CD4-positive, alpha-beta memory T cell (primary cell): ENCODE measurements at regions of chr7 and their contacts with region 1.

Region 1: GRCh38 chr7:150685219-150686029 is at the start of gene GIMAP2:
- DNase-seq: peak; percentile 64 to 69 (median 65)
- H3K4me3 ChIP-seq: peak within 1 kb of the TSS; percentile 80 to 97
- H3K4me3 Mint-ChIP-seq: peak within 1 kb of the TSS; percentile 94 to 99 (median 98)
- H3K27ac ChIP-seq: peak within 1 kb of the TSS; percentile 90
- H3K27ac Mint-ChIP-seq: peak within 1 kb of the TSS; percentile 90 to 99 (median 97)
- H3K4me1 ChIP-seq: peaks cover 60% of the 10 kb centered on the region
- H3K4me1 Mint-ChIP-seq: peaks cover 55 to 97% (median 74%) of the 10 kb centered on the region in 4 donors
- H3K27me3 ChIP-seq: no peaks in the 10 kb centered on the region
- H3K27me3 Mint-ChIP-seq: no peaks in the 10 kb centered on the region
- total RNA-seq, gene GIMAP2: 238 to 244 TPM

Region 2: DNA sequence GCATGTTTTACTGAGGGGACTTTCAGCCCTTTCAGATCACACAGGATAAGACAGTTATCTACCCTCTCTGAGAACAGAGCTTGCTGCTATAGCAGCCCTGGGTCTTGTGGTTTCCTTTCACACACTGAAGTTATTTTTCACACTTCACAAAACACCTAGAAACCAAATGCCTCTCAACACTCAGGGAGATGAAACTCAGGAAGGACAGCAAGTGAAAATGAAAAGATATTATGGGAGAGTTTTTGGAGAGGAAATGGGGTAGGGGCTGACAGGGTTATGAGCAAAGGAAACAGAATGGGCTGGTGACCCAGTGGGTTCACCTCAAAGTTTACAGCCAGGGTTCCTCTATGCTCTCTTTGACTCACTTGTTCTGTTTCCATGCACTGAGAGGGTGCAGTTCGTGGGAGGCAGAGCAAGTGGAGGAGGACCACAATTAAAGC is 16.9 kb before region 1 on chr7:
- CTCF ChIA-PET with region 1: interaction called, 5 read pairs
- POLR2A ChIA-PET with region 1: interaction called, 79 read pairs
- intact Hi-C with region 1: loop called (anchors 1 kb)
- DNase-seq: peak; percentile 80 to 88 (median 85)
- H3K4me3 ChIP-seq: peak overlapping the region; percentile 2 to 26
- H3K4me3 Mint-ChIP-seq: peak overlapping the region; percentile 55 to 84 (median 72)
- H3K27ac ChIP-seq: peak overlapping the region; percentile 68
- H3K27ac Mint-ChIP-seq: peak overlapping the region; percentile 82 to 99 (median 98)
- H3K4me1 ChIP-seq: peaks cover 92% of the 10 kb centered on the region
- H3K4me1 Mint-ChIP-seq: peaks cover 63 to 95% (median 79%) of the 10 kb centered on the region in 4 donors
- H3K27me3 ChIP-seq: no peaks in the 10 kb centered on the region
- H3K27me3 Mint-ChIP-seq: no peaks in the 10 kb centered on the region

Region 3: GRCh38 chr7:150703209-150703608 is 17.8 kb after region 1 on chr7:
- CTCF ChIA-PET with region 1: no interaction called
- POLR2A ChIA-PET with region 1: interaction called, 13 read pairs
- intact Hi-C with region 1: no loop called
- DNase-seq: no peak
- H3K4me3 ChIP-seq: no peak overlapping the region
- H3K4me3 Mint-ChIP-seq: peak overlapping the region in 1 of 8 donors; percentile 4
- H3K27ac ChIP-seq: no peak overlapping the region
- H3K27ac Mint-ChIP-seq: no peak overlapping the region
- H3K4me1 ChIP-seq: no peaks in the 10 kb centered on the region
- H3K4me1 Mint-ChIP-seq: peaks cover 5 to 15% (median 9%) of the 10 kb centered on the region in 4 donors
- H3K27me3 ChIP-seq: no peaks in the 10 kb centered on the region
- H3K27me3 Mint-ChIP-seq: no peaks in the 10 kb centered on the region

Region 4: GRCh38 chr7:150731916-150732315 is 46.5 kb after region 1 on chr7:
- CTCF ChIA-PET with region 1: interaction called, 8 read pairs
- POLR2A ChIA-PET with region 1: interaction called, 58 read pairs
- intact Hi-C with region 1: loop called (anchors 5 kb)
- DNase-seq: no peak
- H3K4me3 ChIP-seq: no peak overlapping the region
- H3K4me3 Mint-ChIP-seq: peak overlapping the region; percentile 9 to 95 (median 64)
- H3K27ac ChIP-seq: peak overlapping the region; percentile 6
- H3K27ac Mint-ChIP-seq: peak overlapping the region; percentile 86 to 97 (median 91)
- H3K4me1 ChIP-seq: peaks cover 76% of the 10 kb centered on the region
- H3K4me1 Mint-ChIP-seq: peaks cover 71 to 87% (median 76%) of the 10 kb centered on the region in 4 donors
- H3K27me3 ChIP-seq: no peaks in the 10 kb centered on the region
- H3K27me3 Mint-ChIP-seq: no peaks in the 10 kb centered on the region